ENCODE measurements at regions of chr13 and their contacts with region 1.

Region 1: DNA sequence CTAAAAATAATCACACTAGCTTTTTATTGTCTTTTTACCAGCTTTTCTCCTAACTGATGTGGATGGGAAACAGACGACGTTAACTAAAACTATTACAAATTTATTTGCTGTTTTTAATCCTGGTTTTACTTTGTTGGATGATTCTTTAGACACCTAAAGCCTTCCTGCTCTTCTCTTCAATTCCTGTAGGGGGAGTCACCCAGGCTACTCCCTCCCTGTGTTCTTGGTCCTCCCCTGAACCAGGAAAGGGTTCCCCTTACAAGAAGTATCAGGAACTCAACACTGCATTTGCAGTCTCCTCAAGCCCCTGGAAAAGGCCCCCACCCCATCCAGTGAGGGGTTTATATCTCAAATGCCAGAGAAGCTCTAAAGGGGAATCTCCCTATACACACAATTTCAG is 206.1 kb downstream of the SUCLA2 start:
- DNase-seq: peak; percentile 7
- ATAC-seq: peak; percentile 76
- H3K4me3 ChIP-seq: no peak overlapping the region
- H3K27ac ChIP-seq: no peak overlapping the region
- H3K4me1 ChIP-seq: no peaks in the 10 kb centered on the region
- H3K27me3 ChIP-seq: no peaks in the 10 kb centered on the region
- CTCF ChIP-seq: peak; percentile 47
- EP300 ChIP-seq: no peak
- POLR2A ChIP-seq: no peak
- RAD21 ChIP-seq: no peak

Region 2: DNA sequence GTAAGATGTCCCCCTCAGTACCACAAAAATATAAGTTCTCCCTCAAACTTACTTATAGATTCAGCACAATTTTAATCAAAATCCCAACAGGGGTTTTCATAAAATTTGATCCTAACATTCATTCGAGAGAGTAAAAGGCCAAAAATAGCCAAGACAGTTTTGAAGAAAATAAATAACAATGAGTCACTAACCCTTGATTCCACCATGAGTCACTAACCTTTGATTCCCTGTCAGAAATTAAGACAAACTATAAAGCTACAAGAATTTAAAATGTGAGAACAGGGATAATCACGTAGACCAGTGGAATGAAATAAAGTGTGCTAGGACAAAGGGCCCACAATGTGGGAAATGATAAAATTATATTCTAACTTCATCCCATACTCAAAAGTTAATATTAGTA is 114.2 kb before region 1 on chr13:
- CTCF ChIA-PET with region 1: no interaction called
- POLR2A ChIA-PET with region 1: no interaction called
- in situ Hi-C with region 1: no loop called
- intact Hi-C with region 1: no loop called
- DNase-seq: no peak
- ATAC-seq: no peak
- H3K4me3 ChIP-seq: no peak overlapping the region
- H3K27ac ChIP-seq: no peak overlapping the region
- H3K4me1 ChIP-seq: no peaks in the 10 kb centered on the region
- H3K27me3 ChIP-seq: no peaks in the 10 kb centered on the region
- CTCF ChIP-seq: no peak
- EP300 ChIP-seq: no peak
- POLR2A ChIP-seq: no peak
- RAD21 ChIP-seq: no peak

Region 3: DNA sequence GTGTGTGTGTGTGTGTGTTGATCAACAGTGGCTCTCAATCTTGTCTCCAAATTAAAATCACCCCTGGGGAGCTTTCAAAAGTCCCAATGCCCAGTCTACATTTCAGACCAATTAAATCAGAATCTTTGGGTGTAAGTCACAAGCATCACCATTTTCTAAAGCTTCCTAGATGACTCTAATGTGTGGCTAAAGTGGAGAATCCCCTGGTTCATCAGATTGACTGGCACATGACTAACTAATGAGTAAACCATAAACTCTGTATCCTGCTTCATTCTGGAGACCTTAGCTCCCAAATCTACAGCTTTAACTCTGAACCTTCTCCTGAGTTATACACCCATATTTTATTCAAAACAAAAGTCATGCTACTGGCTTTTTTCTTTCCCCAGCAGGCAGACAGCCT is 74.8 kb after region 1 on chr13:
- CTCF ChIA-PET with region 1: no interaction called
- POLR2A ChIA-PET with region 1: no interaction called
- in situ Hi-C with region 1: no loop called
- intact Hi-C with region 1: no loop called
- DNase-seq: no peak
- ATAC-seq: no peak
- H3K4me3 ChIP-seq: no peak overlapping the region
- H3K27ac ChIP-seq: no peak overlapping the region
- H3K4me1 ChIP-seq: no peaks in the 10 kb centered on the region
- H3K27me3 ChIP-seq: no peaks in the 10 kb centered on the region; a peak in 1 of 5 replicates
- CTCF ChIP-seq: no peak
- EP300 ChIP-seq: no peak
- POLR2A ChIP-seq: no peak
- RAD21 ChIP-seq: no peak

Region 4: DNA sequence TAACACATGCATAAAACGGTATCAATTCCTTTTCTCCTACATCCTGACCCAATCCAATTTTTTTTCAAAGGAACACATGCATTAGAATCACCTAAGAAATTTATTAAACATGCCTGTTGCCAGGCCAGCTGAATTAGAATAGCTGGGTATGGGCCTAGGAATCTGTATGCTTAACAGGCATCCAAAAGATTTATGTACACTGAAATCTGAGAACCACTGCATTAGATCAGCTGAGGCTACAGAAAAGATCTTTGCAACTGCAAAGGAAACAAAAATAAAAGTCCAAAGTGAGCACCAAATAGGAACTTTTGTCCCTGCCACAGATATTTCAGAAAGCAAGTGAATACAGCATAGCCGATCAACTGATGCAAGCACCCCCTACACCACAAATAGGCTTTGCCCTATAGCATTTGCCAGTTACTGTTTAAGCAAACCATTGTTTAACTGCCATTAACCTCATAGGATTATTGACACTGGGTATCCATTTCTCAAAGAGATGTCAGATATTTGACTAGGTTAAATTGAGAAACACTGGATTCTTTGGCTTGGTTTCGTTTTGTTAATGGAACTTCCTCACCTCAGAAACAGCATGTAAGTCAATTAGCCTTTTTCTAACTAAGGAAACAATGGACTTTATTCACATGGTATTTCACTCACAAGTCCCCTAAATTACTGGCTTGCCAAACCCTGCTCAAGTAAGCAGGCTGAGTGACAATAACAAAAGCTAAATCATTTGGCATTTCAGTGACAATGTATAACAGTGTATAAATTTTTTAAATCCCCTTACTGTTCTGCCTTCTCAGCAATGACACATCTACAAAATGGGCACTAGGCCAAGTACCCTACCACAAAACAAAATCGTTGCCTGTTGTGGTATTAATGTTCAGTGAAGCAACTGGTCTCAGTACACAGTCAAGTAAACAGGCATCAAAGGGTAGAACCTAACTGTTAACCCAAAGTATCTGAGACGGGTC is 138.3 kb after region 1 on chr13:
- CTCF ChIA-PET with region 1: no interaction called
- POLR2A ChIA-PET with region 1: no interaction called
- in situ Hi-C with region 1: no loop called
- intact Hi-C with region 1: loop called (anchors 10 kb)
- DNase-seq: peak; percentile 76
- ATAC-seq: peak; percentile 94
- H3K4me3 ChIP-seq: peak overlapping the region in 1 of 3 experiments; percentile 19; a peak in 2 of 6 replicates
- H3K27ac ChIP-seq: peak overlapping the region; percentile 26
- H3K4me1 ChIP-seq: peaks cover 36% of the 10 kb centered on the region
- H3K27me3 ChIP-seq: no peaks in the 10 kb centered on the region
- CTCF ChIP-seq: no peak
- EP300 ChIP-seq: no peak
- POLR2A ChIP-seq: no peak
- RAD21 ChIP-seq: no peak

Region 5: DNA sequence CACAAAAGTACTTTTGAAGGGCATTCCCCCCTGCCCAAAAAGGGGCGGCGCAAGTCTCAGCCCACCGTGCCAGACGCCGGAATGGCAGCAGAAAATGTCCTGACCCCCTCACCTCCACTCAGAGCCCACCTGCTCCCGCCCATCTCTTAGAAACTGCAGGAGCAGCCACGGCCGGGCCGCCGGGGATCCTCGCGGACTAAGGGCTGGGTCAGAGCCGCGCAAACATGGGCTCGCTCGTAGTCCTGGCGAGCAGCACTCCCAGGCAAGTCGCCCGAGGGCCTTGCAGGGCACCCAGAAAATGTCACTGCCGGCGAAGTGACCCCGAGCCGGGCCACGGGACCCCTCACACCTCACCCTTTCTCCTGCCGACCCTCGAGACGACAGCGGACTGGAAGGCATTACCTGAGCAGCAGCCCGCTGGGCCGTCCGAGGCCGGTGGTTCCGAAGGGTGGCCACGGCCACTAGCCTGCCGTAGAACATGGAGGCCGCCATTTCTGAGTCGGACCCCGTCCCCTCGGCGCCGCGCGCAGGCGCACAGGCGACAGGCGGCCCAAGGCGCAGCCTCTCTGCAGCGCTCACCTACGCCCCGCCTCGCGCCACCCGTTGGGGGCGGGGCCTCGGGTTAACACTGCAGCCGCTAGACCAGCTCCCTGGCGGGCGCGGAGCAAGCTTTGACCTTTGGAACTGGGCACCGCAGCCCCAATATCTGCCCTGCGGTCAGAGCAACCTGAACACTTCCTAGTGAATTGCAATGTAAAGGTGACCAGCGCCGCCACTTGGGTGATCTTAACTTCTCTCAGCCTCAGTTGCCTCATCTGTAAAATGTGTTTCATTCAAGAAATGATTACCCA is 206.0 kb after region 1 on chr13 and contains the start of gene SUCLA2:
- CTCF ChIA-PET with region 1: no interaction called
- POLR2A ChIA-PET with region 1: no interaction called
- in situ Hi-C with region 1: no loop called
- intact Hi-C with region 1: loop called (anchors 1 kb)
- DNase-seq: peak; percentile 92
- ATAC-seq: peak; percentile 99
- H3K4me3 ChIP-seq: peak within 1 kb of the TSS; percentile 89 to 94 (median 90)
- H3K27ac ChIP-seq: peak within 1 kb of the TSS; percentile 79
- H3K4me1 ChIP-seq: peaks cover 36% of the 10 kb centered on the region
- H3K27me3 ChIP-seq: no peaks in the 10 kb centered on the region
- CTCF ChIP-seq: peak; percentile 52
- EP300 ChIP-seq: no peak
- POLR2A ChIP-seq: peak; percentile 66 to 93
- RAD21 ChIP-seq: peak; percentile 28; the same call in 1 of the 2 replicates
- total RNA-seq, gene SUCLA2: 77.1 and 121 TPM in 2 replicates

Region 6: DNA sequence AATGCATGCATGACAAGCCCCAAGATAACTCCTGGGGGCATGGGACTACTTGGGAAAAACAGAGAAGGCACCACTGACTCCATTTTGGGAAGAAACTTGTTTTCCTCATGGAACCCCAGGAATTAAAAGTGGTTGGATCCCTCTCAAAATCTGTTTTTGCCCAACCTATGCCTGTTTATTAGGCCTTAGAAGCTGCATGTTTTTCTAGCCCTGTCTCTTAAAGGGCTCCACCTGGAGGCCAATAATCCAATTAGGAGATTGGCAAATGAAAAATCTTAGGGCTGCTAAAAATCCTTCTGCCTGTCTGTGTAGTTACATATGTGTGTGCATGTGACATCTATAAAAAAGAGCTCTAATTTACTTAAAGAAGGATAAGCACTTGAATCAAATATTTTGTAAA is 273.1 kb after region 1 on chr13:
- CTCF ChIA-PET with region 1: no interaction called
- POLR2A ChIA-PET with region 1: no interaction called
- in situ Hi-C with region 1: no loop called
- intact Hi-C with region 1: loop called (anchors 2 kb)
- DNase-seq: peak; percentile 13
- ATAC-seq: no peak
- H3K4me3 ChIP-seq: no peak overlapping the region
- H3K27ac ChIP-seq: no peak overlapping the region
- H3K4me1 ChIP-seq: peaks cover 15% of the 10 kb centered on the region
- H3K27me3 ChIP-seq: no peaks in the 10 kb centered on the region
- CTCF ChIP-seq: 0 out of 2 replicates have a peak, but pooled peaks have one; percentile 9
- EP300 ChIP-seq: no peak
- POLR2A ChIP-seq: no peak
- RAD21 ChIP-seq: no peak

Measured in HepG2 (cell line).